ENCODE measurements at regions of chr20 and their contacts with region 1.

Region 1: GRCh38 chr20:62318400-62319345 is 15.9 kb downstream of the ADRM1 start:
- DNase-seq: no peak

Region 2: DNA sequence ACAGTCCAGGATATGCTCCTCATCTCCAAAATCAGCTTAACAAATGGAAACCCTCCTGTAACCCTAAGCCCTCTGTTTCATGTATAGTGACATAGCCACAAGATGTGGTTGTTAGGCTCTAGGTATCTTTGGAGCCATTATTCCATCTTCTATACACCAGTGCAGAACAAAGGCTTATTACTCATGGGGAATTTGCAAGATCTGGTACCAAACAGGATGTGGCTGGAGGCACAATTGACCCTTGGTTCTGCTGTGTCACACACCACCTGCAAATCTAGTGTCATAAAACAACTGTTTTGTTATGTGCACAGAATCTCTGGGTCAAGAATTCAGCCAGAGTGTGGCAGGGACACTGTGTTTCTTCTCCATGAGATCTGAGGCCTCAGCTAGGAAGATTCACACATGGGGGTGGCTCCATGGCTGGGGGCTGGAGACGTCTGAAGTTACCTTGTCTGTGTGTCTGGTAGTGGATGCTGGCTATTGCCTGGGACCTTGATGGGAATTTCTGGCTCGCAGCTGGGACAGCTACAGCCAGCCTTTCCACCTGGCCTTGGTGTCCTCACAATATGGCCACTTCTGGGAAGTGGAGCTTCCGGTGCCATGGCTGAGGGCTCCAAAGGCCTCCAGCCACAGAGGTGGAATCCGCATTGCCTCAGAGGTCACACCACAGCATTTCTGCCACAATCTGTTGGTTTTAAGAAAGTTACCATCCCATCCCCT is 1990.5 kb before region 1 on chr20:
- intact Hi-C with region 1: loop called in 1 of 2 experiments (anchors 5 kb)
- DNase-seq: no peak

Region 3: DNA sequence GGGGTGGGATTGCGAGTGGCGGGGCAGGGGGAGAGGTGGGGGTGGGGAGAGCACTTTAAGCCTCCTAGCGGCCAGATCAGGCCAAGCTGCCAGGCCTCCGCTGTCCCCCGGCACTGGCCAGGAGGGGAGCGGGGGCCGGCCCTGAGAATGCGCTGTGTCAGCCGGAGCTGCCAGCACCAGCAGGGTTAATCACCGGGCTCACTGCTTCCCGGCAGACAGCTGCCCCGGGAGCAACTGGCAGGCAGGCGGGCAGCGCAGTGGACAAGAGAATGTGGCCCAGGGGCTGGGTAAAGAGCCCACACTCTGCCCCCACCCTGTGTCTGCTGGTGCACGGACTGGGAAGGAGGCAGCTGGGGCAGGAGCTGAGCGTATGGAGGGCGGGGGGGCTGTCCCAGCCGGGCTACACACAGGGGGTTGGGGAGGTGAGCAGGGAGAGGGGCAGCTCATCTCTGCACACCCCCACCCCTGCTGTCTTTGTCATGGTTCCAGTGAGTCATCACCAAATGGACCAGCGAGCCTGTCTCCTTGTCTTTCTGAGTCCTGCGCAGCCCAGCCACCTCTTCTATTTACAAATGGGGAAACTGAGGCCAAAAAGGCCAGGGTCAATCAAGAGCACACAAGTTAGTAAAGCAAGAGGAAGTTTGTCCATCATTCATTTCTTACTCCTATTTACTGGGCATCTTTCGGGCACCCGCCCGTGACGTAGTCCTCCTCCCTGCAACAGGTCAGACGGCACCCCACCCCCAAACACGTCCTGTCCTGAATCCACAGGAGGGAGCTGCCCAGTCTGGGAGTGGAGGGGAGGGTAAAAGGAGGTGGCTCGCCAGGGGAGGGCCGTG is 50.5 kb after region 1 on chr20:
- intact Hi-C with region 1: loop called in 1 of 2 experiments (anchors 10 kb)
- DNase-seq: no peak